ENCODE measurements at regions of chr11 and their contacts with region 1.

Region 1: GRCh38 chr11:118592616-118593367 is 14.6 kb upstream of the PHLDB1 start:
- DNase-seq: no peak
- H3K4me3 ChIP-seq: no peak overlapping the region
- H3K27ac ChIP-seq: no peak overlapping the region
- H3K4me1 ChIP-seq: peaks cover 0 to 9% (median 6%) of the 10 kb centered on the region in 4 experiments
- H3K27me3 ChIP-seq: no peaks in the 10 kb centered on the region

Region 2: GRCh38 chr11:118430956-118431355 is 161.8 kb before region 1 on chr11:
- CTCF ChIA-PET with region 1: no interaction called
- POLR2A ChIA-PET with region 1: no interaction called
- DNase-seq: no peak
- H3K4me3 ChIP-seq: no peak overlapping the region
- H3K27ac ChIP-seq: no peak overlapping the region
- H3K4me1 ChIP-seq: peaks cover 8 to 34% (median 26%) of the 10 kb centered on the region in 4 experiments
- H3K27me3 ChIP-seq: no peaks in the 10 kb centered on the region

Region 3: DNA sequence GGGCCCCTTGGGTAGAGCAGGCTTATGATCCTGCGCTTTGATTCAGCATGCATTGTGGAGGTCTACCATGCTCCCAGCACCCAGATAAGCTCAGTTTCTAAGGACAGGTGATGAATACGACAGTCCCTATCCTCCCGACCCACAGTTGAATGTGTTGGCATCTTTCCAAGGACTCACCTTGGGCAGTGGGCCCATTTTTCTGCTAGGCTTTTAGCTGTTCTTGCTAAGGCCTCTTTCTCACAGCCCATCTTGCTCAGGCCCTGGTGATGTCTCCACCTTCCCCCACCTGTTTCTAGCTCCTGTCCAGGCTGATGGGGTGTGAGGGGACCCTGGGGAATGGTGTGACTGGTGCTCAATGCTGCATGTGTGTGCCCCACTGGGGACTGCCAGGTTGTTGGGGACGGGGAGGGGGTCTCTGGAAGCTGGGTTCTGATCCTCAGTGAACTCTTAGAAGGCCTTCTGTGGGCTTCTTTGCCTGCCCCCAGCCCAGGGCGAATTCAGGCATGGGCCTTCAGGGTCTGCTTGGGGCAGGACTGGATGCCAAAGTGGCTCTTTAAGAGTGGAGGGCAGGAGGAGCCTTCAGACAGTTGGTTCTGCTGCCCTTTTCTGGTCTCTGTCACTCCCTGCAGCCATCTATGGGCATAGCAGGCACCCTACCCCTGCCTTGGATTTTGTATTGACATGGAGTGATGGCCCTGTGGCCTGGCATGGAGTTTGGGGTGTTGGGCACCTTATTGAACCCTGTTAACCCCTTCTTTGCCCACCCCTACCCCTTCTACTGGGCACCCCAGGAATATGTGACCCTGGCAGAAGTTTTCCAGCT is 47.8 kb after region 1 on chr11:
- CTCF ChIA-PET with region 1: interaction called, 10 read pairs
- POLR2A ChIA-PET with region 1: no interaction called
- DNase-seq: peak in 2 of 3 donors; percentile 20 to 22
- H3K4me3 ChIP-seq: no peak overlapping the region
- H3K27ac ChIP-seq: no peak overlapping the region
- H3K4me1 ChIP-seq: no peaks in the 10 kb centered on the region
- H3K27me3 ChIP-seq: no peaks in the 10 kb centered on the region

Region 4: GRCh38 chr11:118659314-118659952 is 66.6 kb after region 1 on chr11:
- CTCF ChIA-PET with region 1: interaction called, 27 read pairs
- POLR2A ChIA-PET with region 1: no interaction called
- DNase-seq: peak; percentile 76 to 87 (median 86)
- H3K4me3 ChIP-seq: peak overlapping the region in 2 of 7 experiments; percentile 20 to 55
- H3K27ac ChIP-seq: no peak overlapping the region
- H3K4me1 ChIP-seq: peaks cover 0 to 10% (median 7%) of the 10 kb centered on the region in 4 experiments
- H3K27me3 ChIP-seq: no peaks in the 10 kb centered on the region